Activated CD4-positive, alpha-beta memory T cell treated with anti-CD3 and anti-CD28 coated beads for 36 hours (primary cell): ENCODE measurements at regions of chr12 and their contacts with region 1.

Region 1: GRCh38 chr12:50055831-50056638 is 1.4 kb upstream of the ASIC1 start:
- DNase-seq: peak; percentile 71
- H3K4me3 Mint-ChIP-seq: peak overlapping the region; percentile 31
- H3K27ac Mint-ChIP-seq: no peak overlapping the region
- H3K4me1 Mint-ChIP-seq: peaks cover 24% of the 10 kb centered on the region
- H3K27me3 Mint-ChIP-seq: peaks cover 48% of the 10 kb centered on the region

Region 2: DNA sequence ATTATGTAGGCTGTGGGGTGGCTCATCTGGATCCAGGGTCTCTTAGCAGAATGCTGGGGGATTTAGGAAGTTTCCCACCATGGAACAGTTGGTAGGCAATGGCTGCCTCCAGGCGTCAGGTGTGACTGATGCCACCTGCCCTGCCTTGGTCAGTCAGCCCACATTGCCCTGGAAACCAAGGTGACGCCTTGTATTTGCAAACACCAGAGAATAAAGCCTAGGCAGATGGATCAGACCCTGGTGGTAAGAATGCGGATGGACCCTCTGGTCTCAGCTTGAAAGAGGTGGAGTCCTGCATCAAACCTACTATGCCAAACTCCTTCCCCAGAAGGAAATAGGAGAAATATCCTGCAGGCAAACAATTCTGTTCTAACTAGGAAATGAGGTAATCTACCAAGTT is 266.0 kb before region 1 on chr12:
- CTCF ChIA-PET with region 1: no interaction called
- POLR2A ChIA-PET with region 1: no interaction called
- intact Hi-C with region 1: no loop called
- DNase-seq: no peak
- H3K4me3 Mint-ChIP-seq: no peak overlapping the region
- H3K27ac Mint-ChIP-seq: no peak overlapping the region
- H3K4me1 Mint-ChIP-seq: no peaks in the 10 kb centered on the region
- H3K27me3 Mint-ChIP-seq: no peaks in the 10 kb centered on the region

Region 3: GRCh38 chr12:49866859-49867579 is 189.0 kb before region 1 on chr12:
- CTCF ChIA-PET with region 1: interaction called, 12 read pairs
- POLR2A ChIA-PET with region 1: no interaction called
- intact Hi-C with region 1: no loop called
- DNase-seq: peak; percentile 83
- H3K4me3 Mint-ChIP-seq: no peak overlapping the region
- H3K27ac Mint-ChIP-seq: no peak overlapping the region
- H3K4me1 Mint-ChIP-seq: no peaks in the 10 kb centered on the region
- H3K27me3 Mint-ChIP-seq: no peaks in the 10 kb centered on the region

Region 4: DNA sequence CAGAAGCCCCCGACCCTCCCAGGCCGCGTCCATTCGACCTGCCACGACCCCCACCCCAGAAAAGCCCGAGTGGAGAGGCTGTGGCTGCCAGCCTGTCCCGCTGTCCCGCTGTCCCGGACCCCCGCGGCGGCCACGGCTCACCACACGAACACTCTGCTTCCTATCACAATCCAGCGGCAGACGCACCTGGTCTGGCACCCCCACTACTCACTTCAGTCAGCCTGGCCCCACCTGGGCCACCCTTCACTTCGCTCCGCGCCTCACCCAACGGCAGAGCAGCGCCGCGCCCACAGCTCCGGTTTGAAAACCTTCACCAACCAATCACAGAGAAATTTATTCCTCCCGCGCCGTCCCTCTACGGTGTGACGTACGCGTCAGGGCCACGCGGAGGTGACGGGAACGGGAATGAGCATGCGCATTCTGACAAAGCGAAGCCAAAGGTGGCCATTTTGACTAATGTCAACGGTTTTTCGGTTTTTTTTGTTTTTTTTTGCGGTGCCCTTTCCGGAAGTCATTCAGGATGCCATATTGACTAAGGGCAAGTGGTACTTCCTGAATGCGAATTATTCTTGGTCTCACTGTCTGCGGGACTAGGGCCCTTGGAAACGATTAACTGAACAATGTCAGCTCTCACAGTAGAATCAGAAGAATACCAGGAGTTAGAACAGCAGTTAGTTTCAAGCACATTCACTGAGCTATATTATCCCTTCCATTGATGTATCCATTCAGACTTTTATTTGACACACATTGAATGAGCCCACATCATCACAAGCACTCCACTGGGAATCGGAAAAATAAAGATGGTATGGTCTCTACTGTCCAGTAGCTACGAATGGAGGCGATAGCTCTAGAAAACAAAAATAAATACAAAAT is 30.6 kb before region 1 on chr12 and contains the start of gene RACGAP1:
- CTCF ChIA-PET with region 1: interaction called, 15 read pairs
- POLR2A ChIA-PET with region 1: no interaction called
- intact Hi-C with region 1: no loop called
- DNase-seq: peak; percentile 98
- H3K4me3 Mint-ChIP-seq: peak within 1 kb of the TSS; percentile 94
- H3K27ac Mint-ChIP-seq: peak within 1 kb of the TSS; percentile 91
- H3K4me1 Mint-ChIP-seq: peaks cover 14% of the 10 kb centered on the region
- H3K27me3 Mint-ChIP-seq: peaks cover 2% of the 10 kb centered on the region
- total RNA-seq, gene RACGAP1: 145 to 152 TPM

Region 5: GRCh38 chr12:50038336-50038735 is 17.7 kb before region 1 on chr12:
- CTCF ChIA-PET with region 1: interaction called, 197 read pairs
- POLR2A ChIA-PET with region 1: interaction called, 4 read pairs
- intact Hi-C with region 1: loop called (anchors 1 kb)
- DNase-seq: no peak
- H3K4me3 Mint-ChIP-seq: no peak overlapping the region
- H3K27ac Mint-ChIP-seq: no peak overlapping the region
- H3K4me1 Mint-ChIP-seq: peaks cover 12% of the 10 kb centered on the region
- H3K27me3 Mint-ChIP-seq: peaks cover 2% of the 10 kb centered on the region

Region 6: GRCh38 chr12:50043854-50044253 is 12.2 kb before region 1 on chr12:
- CTCF ChIA-PET with region 1: interaction called, 197 read pairs
- POLR2A ChIA-PET with region 1: interaction called, 4 read pairs
- intact Hi-C with region 1: loop called (anchors 1 kb)
- DNase-seq: peak; percentile 41
- H3K4me3 Mint-ChIP-seq: no peak overlapping the region
- H3K27ac Mint-ChIP-seq: peak overlapping the region; percentile 63
- H3K4me1 Mint-ChIP-seq: peaks cover 21% of the 10 kb centered on the region
- H3K27me3 Mint-ChIP-seq: no peaks in the 10 kb centered on the region

Region 7: DNA sequence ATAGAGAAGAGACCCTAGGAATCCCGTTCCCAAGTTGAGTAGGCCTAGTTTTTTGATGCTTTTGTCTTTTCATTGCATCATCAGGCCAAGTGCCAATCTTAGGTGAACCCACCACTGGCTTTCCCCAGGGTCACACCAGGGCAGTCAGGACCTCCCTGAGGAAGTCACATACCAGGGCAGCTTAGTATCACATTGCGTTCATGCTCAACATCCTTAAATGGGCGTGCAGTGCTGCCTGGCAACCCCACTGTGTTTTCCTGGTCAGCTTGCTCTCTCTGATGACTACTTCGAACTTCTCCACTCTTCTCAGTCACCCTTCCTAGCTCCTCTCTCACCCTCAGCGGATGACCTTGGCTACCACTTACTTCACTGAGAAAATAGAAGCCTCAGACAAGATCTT is 10.4 kb after region 1 on chr12:
- CTCF ChIA-PET with region 1: interaction called, 32 read pairs
- POLR2A ChIA-PET with region 1: no interaction called
- intact Hi-C with region 1: no loop called
- DNase-seq: no peak
- H3K4me3 Mint-ChIP-seq: no peak overlapping the region
- H3K27ac Mint-ChIP-seq: no peak overlapping the region
- H3K4me1 Mint-ChIP-seq: peaks cover 4% of the 10 kb centered on the region
- H3K27me3 Mint-ChIP-seq: peaks cover 6% of the 10 kb centered on the region

Region 8: DNA sequence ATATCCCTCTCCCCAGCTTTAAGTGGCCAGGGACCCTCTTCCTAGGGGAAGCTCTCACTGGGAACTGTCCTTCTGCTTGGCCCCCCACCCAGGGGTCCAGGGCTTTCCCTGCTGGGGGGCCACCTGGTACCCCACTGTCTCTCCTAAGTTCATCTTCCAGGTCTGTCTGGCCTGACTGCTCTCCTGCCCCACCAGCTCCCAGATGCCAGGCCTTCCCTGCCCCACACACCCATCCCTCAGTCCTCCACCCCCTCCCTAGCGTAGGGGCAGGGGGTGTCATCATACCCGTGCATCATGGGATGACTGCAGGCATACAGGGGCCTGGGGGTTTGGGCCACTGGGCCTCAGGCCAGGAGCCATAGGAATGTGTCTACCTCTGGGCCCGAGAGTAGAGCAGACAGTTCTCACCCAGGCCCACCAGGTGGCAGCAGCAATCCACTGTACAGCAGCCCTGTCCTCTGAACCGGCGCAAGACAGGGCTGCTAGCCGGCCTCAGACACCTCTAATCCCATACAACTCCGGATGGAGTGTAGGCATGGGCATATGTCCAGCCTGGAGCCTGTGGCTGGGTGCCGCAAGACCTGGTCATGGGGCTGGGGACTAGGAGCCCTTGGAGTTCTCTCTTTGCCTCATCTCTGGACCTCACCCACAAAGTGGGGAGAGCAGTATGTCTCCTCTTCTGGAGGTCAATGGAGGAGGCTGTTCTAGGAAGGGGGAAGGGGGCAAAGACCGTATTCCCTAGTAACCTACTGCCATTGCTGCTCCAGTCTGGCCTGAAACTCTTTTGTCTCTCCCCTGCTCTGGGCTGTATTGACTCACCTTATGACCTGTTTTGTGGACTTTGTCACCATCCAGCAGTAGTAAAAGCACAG is 19.1 kb after region 1 on chr12:
- CTCF ChIA-PET with region 1: interaction called, 32 read pairs
- POLR2A ChIA-PET with region 1: no interaction called
- intact Hi-C with region 1: no loop called
- DNase-seq: peak; percentile 87
- H3K4me3 Mint-ChIP-seq: no peak overlapping the region
- H3K27ac Mint-ChIP-seq: no peak overlapping the region
- H3K4me1 Mint-ChIP-seq: peaks cover 7% of the 10 kb centered on the region
- H3K27me3 Mint-ChIP-seq: no peaks in the 10 kb centered on the region

Region 9: GRCh38 chr12:50187084-50187900 is 131.3 kb after region 1 on chr12:
- CTCF ChIA-PET with region 1: no interaction called
- POLR2A ChIA-PET with region 1: no interaction called
- intact Hi-C with region 1: no loop called
- DNase-seq: peak; percentile 81
- H3K4me3 Mint-ChIP-seq: peak overlapping the region; percentile 46
- H3K27ac Mint-ChIP-seq: peak overlapping the region; percentile 99
- H3K4me1 Mint-ChIP-seq: peaks cover 55% of the 10 kb centered on the region
- H3K27me3 Mint-ChIP-seq: no peaks in the 10 kb centered on the region